ENCODE measurements at regions of chr1 and their contacts with region 1.

Region 1: DNA sequence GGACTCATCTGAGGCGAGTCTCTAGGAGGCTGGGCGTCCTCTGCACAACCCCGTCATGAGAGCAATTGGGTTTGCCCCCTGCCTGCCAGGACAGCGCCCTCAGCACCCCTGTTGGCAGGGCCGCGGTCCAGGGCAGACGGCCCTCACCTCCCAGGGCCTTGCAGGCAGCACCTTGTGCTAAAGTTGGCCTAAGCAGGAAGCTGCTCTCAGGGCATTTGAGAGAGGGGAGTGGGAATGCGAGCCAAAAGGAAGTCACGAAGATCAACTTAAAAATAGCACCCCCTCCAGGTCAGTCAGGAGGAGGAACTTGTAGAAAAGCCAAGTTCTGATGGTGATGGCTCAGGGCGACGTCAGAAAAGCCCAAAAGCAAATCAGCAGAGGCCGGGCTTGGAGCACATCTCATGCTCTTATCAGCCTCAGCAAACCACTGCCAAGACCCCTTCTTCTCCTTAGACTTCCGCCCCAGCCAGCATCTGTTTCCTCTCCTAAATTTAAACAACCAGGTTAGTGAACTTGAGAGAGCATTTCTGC is 12.6 kb upstream of the ADORA3 start:
- DNase-seq: peak; percentile 71
- ATAC-seq: peak; percentile 64
- H3K4me3 Mint-ChIP-seq: peak overlapping the region; percentile 56
- H3K27ac Mint-ChIP-seq: peak overlapping the region; percentile 86
- H3K4me1 Mint-ChIP-seq: peaks cover 46% of the 10 kb centered on the region
- H3K27me3 Mint-ChIP-seq: no peaks in the 10 kb centered on the region

Region 2: DNA sequence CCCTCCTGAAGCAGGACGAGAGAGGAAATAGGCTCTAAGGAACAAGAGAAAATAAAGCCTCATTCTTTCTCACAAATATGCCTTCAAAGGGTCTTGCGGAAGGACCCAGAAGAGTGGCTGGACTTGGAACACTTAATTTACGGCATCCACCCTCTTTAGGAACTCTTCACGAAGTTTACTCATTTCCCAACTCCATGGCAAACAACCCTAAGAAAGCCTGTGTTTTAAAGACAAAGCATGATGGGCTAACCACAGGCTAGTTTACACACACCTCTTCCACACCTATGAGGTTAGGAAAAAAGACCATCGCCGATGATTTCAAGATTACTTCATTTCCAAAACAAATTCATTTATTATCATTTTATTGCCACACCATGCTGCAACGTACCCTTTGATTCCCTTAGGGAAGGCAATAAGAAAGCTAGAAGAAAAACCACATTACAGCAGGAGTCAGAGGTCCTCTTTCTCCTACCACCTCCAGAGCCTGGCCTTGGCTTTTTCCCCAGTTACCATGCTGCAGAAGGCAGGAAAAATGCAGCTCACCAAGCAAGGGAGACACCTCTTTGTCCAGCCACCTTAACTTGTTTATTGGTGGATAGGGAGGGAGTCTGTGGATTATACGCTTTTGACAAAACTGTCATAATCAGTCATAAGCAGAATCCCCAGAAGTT is 258.9 kb before region 1 on chr1:
- CTCF ChIA-PET with region 1: no interaction called
- POLR2A ChIA-PET with region 1: no interaction called
- DNase-seq: no peak
- ATAC-seq: no peak
- H3K4me3 Mint-ChIP-seq: no peak overlapping the region
- H3K27ac Mint-ChIP-seq: no peak overlapping the region
- H3K4me1 Mint-ChIP-seq: no peaks in the 10 kb centered on the region
- H3K27me3 Mint-ChIP-seq: peaks cover 4% of the 10 kb centered on the region

Region 3: GRCh38 chr1:111309690-111310089 is 206.4 kb before region 1 on chr1:
- CTCF ChIA-PET with region 1: no interaction called
- POLR2A ChIA-PET with region 1: no interaction called
- DNase-seq: no peak
- ATAC-seq: no peak
- H3K4me3 Mint-ChIP-seq: no peak overlapping the region
- H3K27ac Mint-ChIP-seq: no peak overlapping the region
- H3K4me1 Mint-ChIP-seq: no peaks in the 10 kb centered on the region
- H3K27me3 Mint-ChIP-seq: peaks cover 12% of the 10 kb centered on the region

Region 4: DNA sequence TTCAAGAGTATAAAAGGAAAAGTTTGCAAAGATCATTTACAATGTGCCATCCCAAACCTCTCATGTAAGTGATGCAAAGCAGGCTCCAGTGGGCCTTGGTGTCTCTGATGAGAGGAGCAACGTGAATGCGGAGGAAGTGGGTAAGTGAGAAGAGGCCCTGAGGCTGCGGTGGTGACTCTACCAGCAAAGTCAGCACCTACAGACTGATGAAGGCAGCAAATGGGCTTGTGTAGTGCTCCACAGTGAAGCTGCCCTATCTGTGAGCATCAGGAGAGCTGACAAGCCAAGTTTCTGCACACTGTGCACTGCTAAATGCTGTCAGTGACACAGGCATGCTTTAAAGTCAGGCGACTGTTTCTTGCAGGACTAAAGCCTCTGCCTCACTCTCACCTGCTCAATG is 87.9 kb after region 1 on chr1:
- CTCF ChIA-PET with region 1: interaction called, 17 read pairs
- POLR2A ChIA-PET with region 1: interaction called, 6 read pairs
- DNase-seq: peak; percentile 92
- ATAC-seq: peak; percentile 98
- H3K4me3 Mint-ChIP-seq: peak overlapping the region; percentile 40
- H3K27ac Mint-ChIP-seq: peak overlapping the region; percentile 92
- H3K4me1 Mint-ChIP-seq: peaks cover 73% of the 10 kb centered on the region
- H3K27me3 Mint-ChIP-seq: no peaks in the 10 kb centered on the region

Region 5: GRCh38 chr1:111619635-111620440 is 103.8 kb after region 1 on chr1 and contains the start of gene RAP1A:
- CTCF ChIA-PET with region 1: interaction called, 21 read pairs
- POLR2A ChIA-PET with region 1: interaction called, 6 read pairs
- DNase-seq: peak; percentile 96
- ATAC-seq: peak; percentile 77
- H3K4me3 Mint-ChIP-seq: peak within 1 kb of the TSS; percentile 95
- H3K27ac Mint-ChIP-seq: peak within 1 kb of the TSS; percentile 92
- H3K4me1 Mint-ChIP-seq: peaks cover 69% of the 10 kb centered on the region
- H3K27me3 Mint-ChIP-seq: no peaks in the 10 kb centered on the region
- total RNA-seq, gene RAP1A: 132 to 133 TPM